Heart left ventricle (tissue), 16 donors: ENCODE measurements at regions of chrX and their contacts with region 1.

Region 1: DNA sequence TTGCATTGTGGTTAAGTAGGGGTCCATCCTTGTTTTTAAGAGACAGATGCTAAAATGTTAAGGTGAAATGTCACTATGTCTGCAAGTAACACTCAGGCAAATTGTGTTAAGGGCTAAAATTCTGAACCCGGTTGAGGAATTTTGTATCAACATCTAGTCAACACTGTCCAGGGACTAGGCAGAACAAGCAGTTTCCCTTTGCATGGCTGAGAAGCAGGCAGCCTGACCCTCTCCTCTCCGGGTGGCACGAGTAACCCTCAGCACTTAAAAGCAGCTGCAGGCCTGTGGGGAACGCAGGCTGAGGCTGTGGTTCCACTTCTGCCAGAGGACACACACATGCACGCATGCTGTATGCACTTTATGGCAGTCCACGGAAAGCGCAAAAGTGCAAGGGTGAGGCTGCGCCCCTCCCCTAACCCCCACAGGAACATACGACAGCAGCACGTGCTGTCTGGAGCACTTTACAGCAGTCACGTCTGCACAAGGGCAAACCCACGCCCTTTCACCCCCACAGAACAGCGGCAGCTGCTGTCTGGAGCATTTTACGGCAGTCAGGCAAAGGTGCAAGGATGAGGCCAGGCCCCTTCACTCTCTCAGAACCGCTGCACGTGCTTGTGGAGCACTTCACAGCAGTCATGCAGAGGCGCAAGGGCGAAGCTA is 619 bp upstream of the MPC1L start:
- DNase-seq: no peak
- ATAC-seq: no peak
- H3K4me3 ChIP-seq: no peak overlapping the region
- H3K27ac ChIP-seq: no peak overlapping the region
- H3K4me1 ChIP-seq: no peaks in the 10 kb centered on the region
- H3K27me3 ChIP-seq: peaks cover 0 to 10% (median 0%) of the 10 kb centered on the region in 9 donors
- CTCF ChIP-seq: no peak
- POLR2A ChIP-seq: no peak

Region 2: GRCh38 chrX:40612511-40612910 is 10.1 kb before region 1 on chrX:
- intact Hi-C with region 1: loop called in 1 of 10 experiments (anchors 2 kb)
- DNase-seq: no peak
- ATAC-seq: no peak
- H3K4me3 ChIP-seq: no peak overlapping the region
- H3K27ac ChIP-seq: no peak overlapping the region
- H3K4me1 ChIP-seq: no peaks in the 10 kb centered on the region
- H3K27me3 ChIP-seq: peaks cover 0 to 32% (median 0%) of the 10 kb centered on the region in 9 donors
- CTCF ChIP-seq: no peak
- POLR2A ChIP-seq: no peak